ENCODE measurements at regions of chr17 and their contacts with region 1.

Region 1: GRCh38 chr17:8941520-8941919 is 24.0 kb downstream of the PIK3R5 start:
- DNase-seq: peak; percentile 82
- ATAC-seq: peak; percentile 74
- H3K4me3 Mint-ChIP-seq: peak overlapping the region; percentile 85
- H3K27ac Mint-ChIP-seq: peak overlapping the region; percentile 99
- H3K4me1 Mint-ChIP-seq: peaks cover 71% of the 10 kb centered on the region
- H3K27me3 Mint-ChIP-seq: no peaks in the 10 kb centered on the region

Region 2: GRCh38 chr17:8820311-8821010 is 121.1 kb before region 1 on chr17:
- POLR2A ChIA-PET with region 1: no interaction called
- DNase-seq: no peak
- ATAC-seq: no peak
- H3K4me3 Mint-ChIP-seq: no peak overlapping the region
- H3K27ac Mint-ChIP-seq: no peak overlapping the region
- H3K4me1 Mint-ChIP-seq: no peaks in the 10 kb centered on the region
- H3K27me3 Mint-ChIP-seq: no peaks in the 10 kb centered on the region

Region 3: GRCh38 chr17:8900626-8901585 is 40.6 kb before region 1 on chr17:
- POLR2A ChIA-PET with region 1: interaction called, 41 read pairs
- DNase-seq: no peak
- ATAC-seq: no peak
- H3K4me3 Mint-ChIP-seq: peak overlapping the region; percentile 60
- H3K27ac Mint-ChIP-seq: peak overlapping the region; percentile 82
- H3K4me1 Mint-ChIP-seq: peaks cover 56% of the 10 kb centered on the region
- H3K27me3 Mint-ChIP-seq: no peaks in the 10 kb centered on the region

Region 4: GRCh38 chr17:8954339-8954738 is 12.8 kb after region 1 on chr17:
- POLR2A ChIA-PET with region 1: interaction called, 30 read pairs
- DNase-seq: peak; percentile 55
- ATAC-seq: peak; percentile 90
- H3K4me3 Mint-ChIP-seq: peak overlapping the region; percentile 77
- H3K27ac Mint-ChIP-seq: peak overlapping the region; percentile 93
- H3K4me1 Mint-ChIP-seq: peaks cover 76% of the 10 kb centered on the region
- H3K27me3 Mint-ChIP-seq: no peaks in the 10 kb centered on the region

Region 5: DNA sequence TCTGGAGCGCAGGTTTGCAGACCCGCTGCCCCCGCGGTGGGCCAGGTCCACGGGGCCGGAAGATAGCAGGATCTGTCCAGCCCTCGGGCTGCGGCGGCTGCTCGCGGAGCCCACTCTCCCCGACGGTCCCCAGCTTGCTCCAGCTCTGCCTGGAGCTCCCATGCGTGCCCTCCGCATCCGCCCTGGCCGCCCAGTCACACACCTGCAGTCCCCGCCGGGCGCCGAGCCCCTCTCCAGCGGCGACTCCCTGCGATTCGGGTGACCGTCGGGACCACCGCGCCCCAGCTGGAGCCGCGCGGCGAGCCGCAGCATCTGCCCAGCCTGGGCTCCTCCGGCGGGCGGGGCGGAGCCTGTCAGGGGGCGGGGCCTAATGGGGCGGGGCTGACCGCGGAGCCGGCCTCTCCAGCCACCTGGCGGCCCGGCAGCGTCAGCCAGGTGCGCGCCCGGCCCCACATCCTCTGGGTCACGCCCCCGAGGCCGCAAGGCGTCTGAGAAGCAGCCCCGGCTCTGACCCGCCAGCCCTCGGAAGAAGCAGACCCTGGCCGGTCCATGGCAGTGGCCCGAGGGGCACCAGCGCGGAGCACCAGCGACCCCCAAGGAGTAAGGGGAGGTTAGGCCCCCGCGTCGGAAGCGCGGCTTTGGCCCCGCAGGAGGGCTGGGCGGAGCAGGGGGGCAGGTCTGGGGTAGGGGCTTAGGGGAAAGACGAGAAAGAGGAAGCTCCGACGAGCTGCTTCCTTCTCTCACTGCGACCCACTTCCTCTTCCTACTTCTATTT is 24.1 kb after region 1 on chr17 and contains the start of gene PIK3R5:
- POLR2A ChIA-PET with region 1: interaction called, 51 read pairs
- DNase-seq: peak; percentile 86
- ATAC-seq: peak; percentile 69
- H3K4me3 Mint-ChIP-seq: peak within 1 kb of the TSS; percentile 98
- H3K27ac Mint-ChIP-seq: peak within 1 kb of the TSS; percentile 98
- H3K4me1 Mint-ChIP-seq: peaks cover 38% of the 10 kb centered on the region
- H3K27me3 Mint-ChIP-seq: no peaks in the 10 kb centered on the region
- total RNA-seq, gene PIK3R5: 81.4 to 84.0 TPM

Measured in activated naive CD8-positive, alpha-beta T cell treated with anti-CD3 and anti-CD28 coated beads, Interleukin-2, amount 10 ng/mL, durations not matched to agents 7 days and 5 days (primary cell).